Heart left ventricle (tissue), 16 donors: ENCODE measurements at regions of chr2 and their contacts with region 1.

Region 1: DNA sequence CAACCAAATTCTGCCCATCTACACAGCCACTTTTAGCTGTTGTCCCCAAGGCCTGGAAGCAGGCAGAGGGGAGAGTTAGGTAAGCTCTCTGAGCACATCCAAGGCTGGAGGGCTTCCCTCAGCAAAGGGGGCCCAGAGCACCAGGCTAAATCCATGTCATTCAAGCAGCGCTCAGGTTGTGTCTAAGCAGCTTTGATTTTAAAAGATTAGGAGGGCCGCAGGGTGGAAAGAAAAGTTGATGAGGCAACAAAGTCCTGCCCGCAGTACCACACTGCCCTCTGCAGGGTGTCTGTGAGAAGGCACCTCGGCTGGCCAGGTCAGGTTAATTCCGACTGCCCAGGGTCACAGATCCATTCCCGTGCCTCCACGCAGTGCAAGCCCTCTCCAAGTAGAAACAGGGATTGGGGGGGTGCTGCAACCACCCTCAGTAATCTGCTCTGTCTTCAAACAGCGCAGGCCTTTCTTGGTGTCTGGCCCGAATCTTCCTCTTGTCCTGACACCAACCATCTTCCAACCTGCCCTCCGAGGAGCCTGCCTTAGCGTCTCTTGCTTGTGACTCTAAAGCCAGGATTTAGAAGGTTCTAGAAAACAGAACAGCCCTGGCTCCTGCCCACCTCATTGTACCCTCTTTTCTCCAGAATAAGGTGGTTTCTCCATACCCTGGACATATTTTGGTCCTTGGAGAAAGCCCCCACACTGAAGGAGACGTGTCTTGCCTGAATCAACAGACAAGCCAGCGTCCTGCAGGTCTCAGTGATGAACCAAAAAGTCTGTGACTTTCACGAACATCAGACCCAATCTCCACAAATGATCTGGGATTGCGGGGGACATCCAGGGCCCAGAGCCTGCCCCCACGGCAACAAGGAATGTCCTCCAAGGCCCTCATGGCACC is 289.2 kb downstream of the TNS1 start:
- DNase-seq: peak; percentile 76 to 88 (median 82)
- ATAC-seq: peak; percentile 42 to 82 (median 77)
- H3K4me3 ChIP-seq: no peak overlapping the region
- H3K27ac ChIP-seq: peak overlapping the region in 11 of 12 donors; percentile 35 to 74 (median 58)
- H3K4me1 ChIP-seq: peaks cover 0 to 28% (median 17%) of the 10 kb centered on the region in 12 donors
- H3K27me3 ChIP-seq: no peaks in the 10 kb centered on the region
- CTCF ChIP-seq: peak; percentile 90 to 99 (median 97)
- POLR2A ChIP-seq: no peak

Region 2: DNA sequence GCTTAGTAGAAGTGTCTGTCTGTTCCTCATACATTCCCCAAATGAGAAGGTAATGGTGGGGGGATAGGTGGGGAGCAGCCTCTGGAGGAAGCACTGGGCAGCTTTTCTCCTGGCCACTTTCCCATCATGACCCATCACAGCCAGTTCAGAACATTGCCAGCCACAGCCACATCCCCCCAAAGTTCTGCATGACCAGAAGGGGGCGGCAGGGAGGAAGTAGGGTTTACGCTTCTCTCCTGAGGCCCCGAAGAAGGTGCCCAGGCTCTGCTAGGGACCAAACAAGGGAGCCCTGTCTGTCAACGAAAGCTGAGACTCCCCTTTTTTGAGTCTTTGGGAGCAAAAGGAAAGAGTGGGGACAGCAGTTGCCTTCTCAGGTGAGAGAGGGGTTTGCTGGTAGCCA is 1026.0 kb before region 1 on chr2:
- intact Hi-C with region 1: loop called (anchors 5 kb)
- DNase-seq: no peak
- ATAC-seq: no peak
- H3K4me3 ChIP-seq: no peak overlapping the region
- H3K27ac ChIP-seq: peak overlapping the region in 2 of 12 donors; percentile 36 to 88
- H3K4me1 ChIP-seq: peaks cover 6 to 91% (median 44%) of the 10 kb centered on the region in 12 donors
- H3K27me3 ChIP-seq: peaks cover 0 to 30% (median 0%) of the 10 kb centered on the region in 9 donors
- CTCF ChIP-seq: peak in 7 of 12 donors; percentile 13 to 40 (median 20)
- POLR2A ChIP-seq: no peak

Region 3: GRCh38 chr2:216989340-216990129 is 724.1 kb before region 1 on chr2:
- intact Hi-C with region 1: loop called in 3 of 10 experiments (anchors 10 kb)
- DNase-seq: no peak
- ATAC-seq: peak in 1 of 4 donors; percentile 43
- H3K4me3 ChIP-seq: no peak overlapping the region
- H3K27ac ChIP-seq: no peak overlapping the region
- H3K4me1 ChIP-seq: peaks cover 0 to 29% (median 8%) of the 10 kb centered on the region in 12 donors
- H3K27me3 ChIP-seq: no peaks in the 10 kb centered on the region
- CTCF ChIP-seq: peak in 6 of 12 donors; percentile 4 to 28 (median 22)
- POLR2A ChIP-seq: no peak

Region 4: GRCh38 chr2:217434181-217434975 is 279.3 kb before region 1 on chr2:
- intact Hi-C with region 1: loop called in 1 of 10 experiments (anchors 10 kb)
- DNase-seq: peak; percentile 87 to 96 (median 93)
- ATAC-seq: peak; percentile 98 to 99 (median 99)
- H3K4me3 ChIP-seq: peak overlapping the region in 7 of 12 donors; percentile 11 to 30 (median 22)
- H3K27ac ChIP-seq: peak overlapping the region in 11 of 12 donors; percentile 44 to 80 (median 71)
- H3K4me1 ChIP-seq: peaks cover 0 to 71% (median 48%) of the 10 kb centered on the region in 12 donors
- H3K27me3 ChIP-seq: no peaks in the 10 kb centered on the region
- CTCF ChIP-seq: peak in 1 of 12 donors; percentile 12
- POLR2A ChIP-seq: no peak

Region 5: GRCh38 chr2:217650716-217651360 is 62.8 kb before region 1 on chr2:
- intact Hi-C with region 1: loop called in 5 of 10 experiments (anchors 2 to 5 kb)
- DNase-seq: peak in 3 of 5 donors; percentile 33 to 43 (median 34)
- ATAC-seq: peak in 2 of 4 donors; percentile 73 to 84
- H3K4me3 ChIP-seq: no peak overlapping the region
- H3K27ac ChIP-seq: no peak overlapping the region
- H3K4me1 ChIP-seq: peaks cover 0 to 16% (median 0%) of the 10 kb centered on the region in 12 donors
- H3K27me3 ChIP-seq: no peaks in the 10 kb centered on the region
- CTCF ChIP-seq: peak; percentile 62 to 84 (median 72)
- POLR2A ChIP-seq: no peak